ENCODE measurements at regions of chr4 and their contacts with region 1.

Region 1: DNA sequence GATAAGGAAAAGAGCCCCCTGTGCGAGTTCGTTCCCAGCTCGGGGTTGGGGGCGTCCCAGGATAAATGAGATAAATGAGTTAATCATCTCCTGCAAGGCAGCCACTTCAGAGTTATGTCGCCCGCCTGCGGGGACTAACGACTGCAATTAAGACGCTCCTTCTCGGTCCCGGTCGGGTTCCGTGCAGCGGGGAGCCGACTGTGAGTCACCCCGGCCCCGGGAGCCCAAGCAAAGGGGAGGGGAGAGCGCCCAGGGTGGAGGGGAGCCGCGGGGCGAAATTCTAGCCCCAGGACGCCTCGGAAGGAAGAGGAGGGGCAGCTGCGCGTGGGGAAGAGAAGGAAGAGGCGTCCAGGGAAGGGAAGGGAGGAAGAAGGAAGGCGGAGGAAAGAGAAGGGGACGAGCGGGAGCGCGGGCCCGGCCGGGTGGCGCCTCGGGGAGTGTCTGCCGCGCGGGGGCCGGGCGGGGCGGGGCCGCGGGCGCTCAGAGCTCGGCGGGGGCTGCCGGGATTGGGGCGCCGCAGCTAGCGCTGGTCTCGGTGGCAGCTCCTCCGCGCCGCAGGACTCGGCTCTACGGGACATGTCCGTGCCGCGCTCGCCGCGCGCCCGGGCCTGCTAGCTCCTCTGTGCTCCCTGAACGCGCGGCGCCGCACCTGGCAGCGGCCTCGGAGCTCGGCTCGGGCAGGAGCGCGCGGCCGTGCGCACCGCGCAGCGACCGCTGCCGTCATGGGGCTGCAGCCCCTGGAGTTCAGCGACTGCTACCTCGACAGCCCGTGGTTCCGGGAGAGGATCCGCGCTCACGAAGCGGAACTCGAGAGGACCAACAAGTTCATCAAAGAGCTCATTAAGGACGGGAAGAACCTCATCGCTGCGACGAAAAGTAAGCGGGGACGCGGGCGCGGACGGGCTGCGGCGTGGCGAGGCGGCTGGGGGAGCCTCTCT is at the start of gene ARHGAP10:
- DNase-seq: peak; percentile 81 to 88
- ATAC-seq: peak; percentile 74 to 79 (median 76)
- H3K4me3 ChIP-seq: peak within 1 kb of the TSS; percentile 93
- H3K27ac ChIP-seq: peak within 1 kb of the TSS; percentile 97
- H3K4me1 ChIP-seq: peaks cover 29% of the 10 kb centered on the region
- H3K27me3 ChIP-seq: no peaks in the 10 kb centered on the region
- CTCF ChIP-seq: no peak
- total RNA-seq, gene ARHGAP10: 34.0 to 43.5 (median 37.3) TPM

Region 2: GRCh38 chr4:147638942-147639341 is 92.9 kb before region 1 on chr4:
- intact Hi-C with region 1: no loop called
- DNase-seq: no peak
- ATAC-seq: no peak
- H3K4me3 ChIP-seq: no peak overlapping the region
- H3K27ac ChIP-seq: no peak overlapping the region
- H3K4me1 ChIP-seq: no peaks in the 10 kb centered on the region
- H3K27me3 ChIP-seq: no peaks in the 10 kb centered on the region
- CTCF ChIP-seq: no peak

Region 3: DNA sequence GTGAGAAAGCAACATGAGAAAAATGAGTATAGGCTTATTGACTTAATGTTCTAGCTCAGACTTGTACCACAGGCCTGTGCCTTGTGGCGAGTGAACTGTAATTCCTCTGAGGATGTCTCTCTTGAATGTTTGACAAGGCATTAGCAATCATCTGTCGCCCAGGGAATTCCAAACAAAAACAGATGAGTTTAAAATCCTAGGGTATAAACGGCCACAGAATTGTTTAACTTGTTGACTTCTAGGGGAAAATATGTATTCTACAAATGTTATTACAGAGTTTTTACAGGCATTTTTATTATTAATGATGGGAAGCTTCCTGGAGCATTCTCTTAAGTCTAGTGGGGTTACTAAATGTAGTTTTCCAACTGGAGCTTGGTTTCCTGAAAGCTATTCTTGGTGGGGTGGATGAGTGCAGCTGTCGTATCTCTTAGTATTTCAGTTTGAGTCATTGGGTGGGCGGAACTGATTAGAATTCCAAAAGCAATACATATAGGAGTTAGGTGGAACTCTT is 40.7 kb after region 1 on chr4:
- intact Hi-C with region 1: loop called (anchors 5 kb)
- DNase-seq: no peak
- ATAC-seq: peak; percentile 68 to 76 (median 76)
- H3K4me3 ChIP-seq: peak overlapping the region; percentile 13
- H3K27ac ChIP-seq: peak overlapping the region; percentile 90
- H3K4me1 ChIP-seq: peaks cover 84% of the 10 kb centered on the region
- H3K27me3 ChIP-seq: no peaks in the 10 kb centered on the region
- CTCF ChIP-seq: no peak

Region 4: DNA sequence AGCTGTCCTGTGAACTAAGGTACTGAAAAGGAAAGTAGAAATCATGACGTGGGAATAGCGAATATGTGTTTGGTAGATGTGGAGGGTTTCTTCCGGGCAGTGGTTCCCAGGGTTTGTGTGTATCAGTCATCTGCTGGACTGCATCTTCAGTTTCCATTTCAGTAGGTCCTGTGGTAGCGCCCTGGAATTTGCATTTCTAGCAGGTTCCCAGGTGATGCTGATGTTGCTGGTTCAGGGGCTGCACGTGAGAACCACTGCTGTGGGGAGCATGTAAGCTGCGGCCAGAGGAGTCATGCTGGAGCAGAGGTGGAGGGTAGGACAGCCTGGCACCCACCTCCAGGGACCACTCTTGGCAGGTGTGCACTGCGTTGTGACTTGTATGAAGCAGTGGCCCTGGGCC is 47.1 kb after region 1 on chr4:
- intact Hi-C with region 1: loop called (anchors 5 kb)
- DNase-seq: no peak
- ATAC-seq: no peak
- H3K4me3 ChIP-seq: no peak overlapping the region
- H3K27ac ChIP-seq: no peak overlapping the region
- H3K4me1 ChIP-seq: peaks cover 62% of the 10 kb centered on the region
- H3K27me3 ChIP-seq: no peaks in the 10 kb centered on the region
- CTCF ChIP-seq: no peak

Region 5: DNA sequence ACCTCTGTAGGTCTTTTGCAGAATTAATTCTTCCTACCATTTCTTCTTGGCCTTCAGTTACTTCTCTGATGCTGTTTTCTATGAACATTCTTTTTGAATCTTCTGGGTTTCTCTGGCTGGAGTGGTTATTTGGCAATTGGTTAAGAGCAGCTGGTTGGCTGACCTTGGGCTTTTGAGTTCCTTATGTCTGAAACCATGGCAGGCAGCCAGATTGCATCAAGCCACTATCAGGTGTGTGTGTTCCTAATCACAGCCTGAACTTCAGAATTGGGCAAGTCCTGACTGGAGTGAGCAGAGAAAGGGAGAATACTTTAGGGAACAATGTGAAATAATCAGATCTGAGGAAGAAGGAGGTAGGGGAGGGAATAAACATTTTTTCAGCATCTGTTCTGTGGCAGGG is 90.3 kb after region 1 on chr4:
- intact Hi-C with region 1: loop called in 1 of 2 experiments (anchors 5 kb)
- DNase-seq: peak; percentile 83 to 91
- ATAC-seq: peak; percentile 64 to 82 (median 79)
- H3K4me3 ChIP-seq: no peak overlapping the region
- H3K27ac ChIP-seq: peak overlapping the region; percentile 81
- H3K4me1 ChIP-seq: peaks cover 61% of the 10 kb centered on the region
- H3K27me3 ChIP-seq: no peaks in the 10 kb centered on the region
- CTCF ChIP-seq: no peak

Region 6: GRCh38 chr4:147831551-147832177 is 99.8 kb after region 1 on chr4:
- intact Hi-C with region 1: loop called (anchors 5 kb)
- DNase-seq: peak in 1 of 2 donors; percentile 52
- ATAC-seq: peak; percentile 64 to 75 (median 69)
- H3K4me3 ChIP-seq: no peak overlapping the region
- H3K27ac ChIP-seq: peak overlapping the region; percentile 84
- H3K4me1 ChIP-seq: peaks cover 84% of the 10 kb centered on the region
- H3K27me3 ChIP-seq: no peaks in the 10 kb centered on the region
- CTCF ChIP-seq: no peak

Measured in psoas muscle (tissue), 8 donors.